GM10248 (cell line): ENCODE measurements at regions of chr19 and their contacts with region 1.

Region 1: GRCh38 chr19:43555185-43555770 is 20.0 kb downstream of the XRCC1 start:
- DNase-seq: peak; percentile 80
- CTCF ChIP-seq: peak; percentile 88

Region 2: GRCh38 chr19:43532962-43533545 is 22.2 kb before region 1 on chr19 and contains the start of gene ZNF575:
- CTCF ChIA-PET with region 1: interaction called, 79 read pairs
- POLR2A ChIA-PET with region 1: no interaction called
- DNase-seq: peak; percentile 92
- CTCF ChIP-seq: no peak

Region 3: GRCh38 chr19:43575156-43575950 is 20.1 kb after region 1 on chr19 and contains the starts of genes PINLYP and XRCC1:
- CTCF ChIA-PET with region 1: interaction called, 97 read pairs
- POLR2A ChIA-PET with region 1: no interaction called
- DNase-seq: peak; percentile 98
- CTCF ChIP-seq: no peak

Region 4: DNA sequence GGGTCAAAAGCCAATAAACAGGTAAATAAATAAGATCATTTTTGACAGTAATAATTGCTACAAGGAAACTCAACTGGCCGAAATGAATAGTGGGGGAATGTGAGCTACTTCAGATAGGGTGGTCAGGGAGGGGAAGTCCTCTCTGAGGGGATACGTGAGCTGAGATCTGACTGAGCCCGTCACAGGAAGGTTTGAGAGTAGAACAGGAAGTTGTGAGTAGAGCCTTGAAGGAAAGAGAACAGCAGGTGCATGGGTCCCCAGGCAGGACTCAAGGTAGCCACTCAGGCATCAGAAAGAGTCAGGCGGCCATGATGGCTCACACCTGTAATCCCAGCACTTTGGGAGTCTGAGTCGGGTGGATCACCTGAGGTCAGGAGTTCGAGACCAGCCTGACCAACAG is 34.4 kb after region 1 on chr19:
- CTCF ChIA-PET with region 1: interaction called, 60 read pairs
- POLR2A ChIA-PET with region 1: no interaction called
- DNase-seq: no peak
- CTCF ChIP-seq: no peak

Region 5: DNA sequence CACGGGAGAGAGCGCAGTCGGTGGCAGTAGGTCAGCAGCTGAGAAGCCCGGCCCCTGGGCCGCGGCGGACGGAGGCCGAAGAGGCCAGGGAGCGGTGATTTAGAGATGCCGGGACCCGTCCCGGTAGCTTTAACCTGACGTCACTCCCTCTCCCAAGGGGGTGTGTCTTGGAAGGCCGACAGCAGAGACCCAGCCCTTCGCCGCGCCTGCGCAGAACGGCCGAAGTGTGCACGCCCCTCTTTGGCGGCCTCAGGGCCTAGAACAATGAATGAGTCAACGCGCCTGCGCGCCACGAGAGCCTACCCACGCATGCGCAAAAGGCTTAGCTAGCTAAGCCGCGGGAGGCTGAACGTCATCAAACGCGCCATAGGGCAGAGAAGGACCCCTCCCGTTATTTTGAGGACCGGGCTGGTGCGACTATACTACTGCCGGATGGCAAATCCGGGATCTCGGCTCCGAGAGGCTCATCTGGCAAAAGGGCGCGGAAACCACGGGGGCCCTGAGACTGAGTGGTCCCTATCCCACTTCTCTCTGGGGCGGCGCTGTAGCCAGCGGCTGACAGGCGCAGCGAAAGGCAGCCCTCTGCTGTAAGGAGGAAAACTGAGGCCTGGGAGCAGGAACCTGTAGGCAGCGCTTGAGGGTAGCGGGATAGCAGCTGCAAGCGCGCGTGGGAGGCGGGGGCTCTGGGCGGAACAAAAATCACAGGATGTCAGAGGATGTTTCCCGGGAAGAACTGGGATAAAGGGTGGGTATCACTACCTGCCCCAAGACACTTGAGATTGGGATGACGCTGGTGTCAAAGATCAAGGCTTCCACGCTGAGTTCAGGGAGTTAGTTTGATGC is 40.9 kb after region 1 on chr19 and contains the starts of genes IRGQ and ZNF576:
- CTCF ChIA-PET with region 1: interaction called, 60 read pairs
- POLR2A ChIA-PET with region 1: no interaction called
- DNase-seq: peak; percentile 99
- CTCF ChIP-seq: no peak

Region 6: DNA sequence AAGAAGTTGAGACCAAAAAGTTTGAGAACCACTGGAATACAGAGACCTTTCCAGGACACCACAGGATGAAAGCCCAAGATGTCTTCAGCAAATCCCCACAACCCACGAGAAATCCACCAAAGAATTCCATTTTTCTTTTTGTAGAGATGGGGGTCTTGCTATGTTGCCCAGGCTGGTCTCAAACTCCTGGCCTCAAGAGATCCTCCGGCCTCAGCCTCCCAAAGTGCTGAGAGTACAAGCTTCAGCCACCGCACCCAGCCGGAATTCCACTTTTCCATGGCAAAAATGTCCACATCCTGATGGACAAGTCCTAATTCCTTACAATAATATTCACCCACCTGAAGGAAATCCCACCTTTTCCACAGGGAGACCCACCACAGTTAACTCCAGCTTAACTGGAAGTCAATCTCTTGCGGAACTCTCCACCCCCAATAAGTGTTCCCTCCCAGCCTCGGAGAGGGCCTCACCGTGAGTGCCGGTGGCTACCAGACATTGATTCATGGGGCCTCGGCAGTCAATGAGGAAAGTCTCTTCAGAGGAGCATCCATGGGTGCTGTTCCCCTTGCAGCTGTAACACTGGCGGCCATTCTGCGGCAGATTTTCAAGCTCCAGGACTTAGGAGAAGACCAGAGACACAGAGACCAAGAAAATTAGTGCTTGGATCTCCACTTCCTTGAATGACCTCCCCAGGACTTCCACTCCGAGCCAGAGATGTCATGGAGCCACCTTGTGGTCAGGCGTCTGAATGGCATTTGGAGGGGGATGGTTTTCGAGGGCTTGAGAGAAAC is 96.7 kb after region 1 on chr19:
- CTCF ChIA-PET with region 1: interaction called, 10 read pairs
- POLR2A ChIA-PET with region 1: no interaction called
- DNase-seq: peak; percentile 62
- CTCF ChIP-seq: peak; percentile 73

Region 7: GRCh38 chr19:43662487-43662886 is 107.2 kb after region 1 on chr19:
- CTCF ChIA-PET with region 1: interaction called, 11 read pairs
- POLR2A ChIA-PET with region 1: no interaction called
- DNase-seq: no peak
- CTCF ChIP-seq: no peak